ENCODE measurements at regions of chr2 and their contacts with region 1.

Region 1: DNA sequence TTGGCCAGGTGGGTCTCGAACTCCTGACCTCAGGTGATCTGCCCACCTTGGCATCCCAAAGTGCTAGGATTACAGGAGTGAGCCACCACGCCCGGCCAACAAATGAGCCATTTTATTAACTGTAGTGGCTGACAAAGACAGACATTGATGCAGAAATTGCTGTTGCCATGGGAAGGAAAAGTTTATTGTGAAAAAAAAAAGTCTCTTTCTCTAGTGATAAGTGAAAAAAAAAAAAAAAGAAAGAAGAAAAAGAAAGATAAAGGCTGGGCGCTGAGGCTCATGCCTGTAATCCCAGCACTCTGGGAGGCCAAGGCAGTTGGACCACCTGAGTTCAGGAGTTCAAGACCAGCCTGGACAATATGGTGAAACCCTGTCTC is 39.8 kb upstream of the RAB1A start:
- DNase-seq: no peak
- H3K4me3 ChIP-seq: no peak overlapping the region
- H3K27ac ChIP-seq: no peak overlapping the region
- H3K4me1 ChIP-seq: no peaks in the 10 kb centered on the region
- H3K27me3 ChIP-seq: no peaks in the 10 kb centered on the region
- CTCF ChIP-seq: no peak
- EP300 ChIP-seq: no peak
- POLR2A ChIP-seq: no peak
- RAD21 ChIP-seq: no peak

Region 2: DNA sequence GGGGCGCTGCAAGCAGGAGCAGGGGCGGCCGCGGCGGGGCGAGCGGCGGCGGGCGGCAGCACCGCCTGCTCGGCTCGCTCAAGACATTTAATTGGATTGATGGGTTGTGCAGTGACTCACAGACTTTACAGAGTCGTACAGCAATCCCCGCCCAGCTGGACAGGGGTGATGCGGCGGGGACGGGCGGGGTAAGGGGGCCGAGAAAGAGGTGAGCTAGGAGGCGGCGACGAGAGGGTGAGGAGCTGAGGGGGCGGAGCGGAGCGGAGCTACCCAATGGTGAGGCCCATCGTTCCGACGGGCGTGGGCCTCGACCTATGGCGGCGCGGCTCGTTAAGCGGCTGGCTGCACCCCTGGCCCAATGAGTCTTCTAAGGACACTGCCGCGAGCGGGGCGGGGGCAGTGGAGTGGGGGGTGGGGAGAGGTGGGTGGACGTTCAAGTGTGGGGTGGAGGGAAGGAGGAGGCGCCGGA is 418.9 kb before region 1 on chr2:
- CTCF ChIA-PET with region 1: no interaction called
- POLR2A ChIA-PET with region 1: no interaction called
- DNase-seq: peak; percentile 96
- H3K4me3 ChIP-seq: peak overlapping the region; percentile 88 to 93 (median 88)
- H3K27ac ChIP-seq: peak overlapping the region; percentile 2; the same call in 1 of the 2 replicates
- H3K4me1 ChIP-seq: peaks cover 0 to 4% (median 2%) of the 10 kb centered on the region in 4 experiments; a peak in 3 of 7 replicates
- H3K27me3 ChIP-seq: peaks cover 0 to 12% (median 6%) of the 10 kb centered on the region in 4 experiments; a peak in 3 of 7 replicates
- CTCF ChIP-seq: no peak
- EP300 ChIP-seq: no peak
- POLR2A ChIP-seq: peak in 1 of 2 experiments; percentile 42; a peak in 1 of 3 replicates
- RAD21 ChIP-seq: peak in 1 of 2 experiments; percentile 14; a peak in 1 of 4 replicates

Region 3: DNA sequence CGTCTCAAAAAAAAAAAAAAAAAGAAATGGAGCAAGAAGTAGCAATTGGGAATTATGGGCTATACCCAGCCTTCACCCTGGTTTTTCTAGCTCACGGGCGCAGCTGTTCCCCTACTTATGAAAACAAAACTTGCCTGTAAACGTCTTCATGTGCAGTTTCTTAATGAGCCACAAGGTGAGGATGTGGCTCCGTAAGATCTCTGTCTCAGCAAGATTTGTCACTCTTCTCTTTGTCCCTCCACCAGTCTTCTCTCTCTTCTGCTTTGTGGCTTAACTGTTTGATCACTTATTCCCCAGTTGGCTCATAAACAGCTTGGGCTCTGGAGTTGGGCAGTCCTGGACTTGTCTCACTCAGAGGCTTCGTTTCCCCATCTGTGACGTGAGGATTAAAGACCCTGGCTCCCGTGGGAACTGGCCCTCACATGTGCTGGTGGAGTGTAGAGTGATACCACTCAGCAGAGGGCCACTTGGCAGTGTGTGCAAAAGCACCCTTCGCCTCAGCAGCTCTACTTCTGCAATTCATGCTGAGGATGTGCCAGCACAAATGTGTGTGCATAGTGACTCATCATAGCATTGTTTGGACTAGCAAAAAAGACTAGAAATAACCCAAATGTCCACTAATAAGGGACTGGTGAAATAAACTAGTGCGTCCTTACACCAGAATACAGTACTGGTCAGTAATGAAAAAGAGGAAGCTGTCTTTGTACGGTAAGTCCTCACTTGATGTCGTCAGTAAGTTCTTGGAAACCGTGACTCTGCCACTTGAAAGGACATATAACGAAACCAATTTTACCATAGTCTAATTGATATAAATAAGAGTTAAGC is 104.8 kb before region 1 on chr2:
- CTCF ChIA-PET with region 1: interaction called, 20 read pairs
- POLR2A ChIA-PET with region 1: interaction called, 5 read pairs
- DNase-seq: no peak
- H3K4me3 ChIP-seq: no peak overlapping the region
- H3K27ac ChIP-seq: no peak overlapping the region
- H3K4me1 ChIP-seq: no peaks in the 10 kb centered on the region
- H3K27me3 ChIP-seq: no peaks in the 10 kb centered on the region
- CTCF ChIP-seq: peak in 2 of 3 experiments; percentile 69 to 76; a peak in 3 of 4 replicates
- EP300 ChIP-seq: no peak
- POLR2A ChIP-seq: no peak
- RAD21 ChIP-seq: peak; percentile 75 to 83

Region 4: GRCh38 chr2:65070172-65070830 is 99.4 kb before region 1 on chr2:
- CTCF ChIA-PET with region 1: interaction called, 27 read pairs
- POLR2A ChIA-PET with region 1: interaction called, 3 read pairs
- DNase-seq: no peak
- H3K4me3 ChIP-seq: no peak overlapping the region
- H3K27ac ChIP-seq: no peak overlapping the region
- H3K4me1 ChIP-seq: peaks cover 0 to under 1% (median 0%) of the 10 kb centered on the region in 4 experiments; a peak in 1 of 7 replicates
- H3K27me3 ChIP-seq: no peaks in the 10 kb centered on the region
- CTCF ChIP-seq: peak; percentile 3 to 37 (median 28); a peak in 3 of 4 replicates
- EP300 ChIP-seq: no peak
- POLR2A ChIP-seq: no peak
- RAD21 ChIP-seq: peak in 1 of 2 experiments; percentile 41; a peak in 2 of 4 replicates

Region 5: GRCh38 chr2:65075605-65076344 is 94.0 kb before region 1 on chr2:
- CTCF ChIA-PET with region 1: interaction called, 27 read pairs
- POLR2A ChIA-PET with region 1: interaction called, 3 read pairs
- DNase-seq: peak in 1 of 2 experiments; percentile 13
- H3K4me3 ChIP-seq: no peak overlapping the region
- H3K27ac ChIP-seq: no peak overlapping the region
- H3K4me1 ChIP-seq: peaks cover 0 to 18% (median 5%) of the 10 kb centered on the region in 4 experiments
- H3K27me3 ChIP-seq: no peaks in the 10 kb centered on the region
- CTCF ChIP-seq: no peak
- EP300 ChIP-seq: no peak
- POLR2A ChIP-seq: no peak
- RAD21 ChIP-seq: no peak

Region 6: GRCh38 chr2:65081232-65081685 is 88.5 kb before region 1 on chr2:
- CTCF ChIA-PET with region 1: interaction called, 27 read pairs
- POLR2A ChIA-PET with region 1: interaction called, 4 read pairs
- DNase-seq: no peak
- H3K4me3 ChIP-seq: no peak overlapping the region
- H3K27ac ChIP-seq: no peak overlapping the region
- H3K4me1 ChIP-seq: peaks cover 0 to 11% (median 2%) of the 10 kb centered on the region in 4 experiments
- H3K27me3 ChIP-seq: no peaks in the 10 kb centered on the region
- CTCF ChIP-seq: no peak
- EP300 ChIP-seq: no peak
- POLR2A ChIP-seq: no peak
- RAD21 ChIP-seq: no peak

Region 7: GRCh38 chr2:65129826-65130663 is 39.7 kb before region 1 on chr2 and contains the start of gene RAB1A:
- CTCF ChIA-PET with region 1: interaction called, 12 read pairs
- POLR2A ChIA-PET with region 1: no interaction called
- DNase-seq: peak; percentile 95 to 100
- H3K4me3 ChIP-seq: peak within 1 kb of the TSS; percentile 90 to 92 (median 90)
- H3K27ac ChIP-seq: peak within 1 kb of the TSS; percentile 83
- H3K4me1 ChIP-seq: peaks cover 0 to 5% (median 3%) of the 10 kb centered on the region in 4 experiments; a peak in 4 of 7 replicates
- H3K27me3 ChIP-seq: no peaks in the 10 kb centered on the region
- CTCF ChIP-seq: peak; percentile 37 to 62 (median 50)
- EP300 ChIP-seq: peak in 1 of 2 experiments; percentile 30; a peak in 1 of 3 replicates
- POLR2A ChIP-seq: peak in 1 of 2 experiments; percentile 90; a peak in 1 of 3 replicates
- RAD21 ChIP-seq: peak in 1 of 2 experiments; percentile 44; a peak in 2 of 4 replicates
- total RNA-seq, gene RAB1A: 119 and 120 TPM in 2 replicates

Measured in H1 (cell line).